GM12878 (cell line): ENCODE measurements at regions of chr17 and their contacts with region 1.

Region 1: DNA sequence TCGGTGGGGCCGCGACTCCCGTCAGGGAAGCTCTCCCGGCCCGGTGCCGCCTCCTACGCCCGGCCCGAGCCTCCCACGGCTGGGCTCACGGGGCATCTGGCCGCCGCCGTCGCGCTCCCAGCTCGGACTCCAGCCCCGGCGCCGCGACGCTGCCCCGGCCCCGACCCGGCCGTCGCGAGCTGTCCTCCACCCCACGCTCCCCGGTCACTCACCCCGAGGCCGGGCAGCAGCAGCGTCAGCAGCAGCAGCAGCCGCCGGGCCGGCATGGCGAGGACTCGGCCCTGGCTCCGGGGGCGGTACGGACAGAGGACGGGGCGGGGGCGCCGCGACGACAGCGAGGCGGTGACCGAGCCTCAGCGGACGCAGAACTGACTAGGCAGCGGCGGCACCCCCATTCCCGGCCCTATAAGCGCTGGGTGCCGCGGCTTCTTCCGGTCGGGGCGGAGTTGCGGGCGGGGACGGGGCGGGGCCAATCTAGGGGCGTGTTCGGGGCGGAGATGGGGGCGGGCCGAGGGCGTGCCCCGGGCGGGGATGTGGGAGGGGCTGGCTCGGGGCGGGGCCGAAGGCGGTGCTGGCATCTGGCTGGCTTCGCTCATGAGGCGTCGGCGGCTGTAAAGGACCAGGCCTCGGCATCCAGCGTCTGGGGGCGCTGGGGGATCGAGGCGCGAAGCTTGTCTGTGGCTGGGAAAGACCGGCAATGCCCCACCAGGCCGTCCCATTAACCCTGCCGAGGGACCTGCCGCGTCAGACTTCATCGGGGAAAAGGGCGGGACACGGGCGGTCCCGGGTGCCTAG is at the start of gene ERN1:
- DNase-seq: peak; percentile 54
- ATAC-seq: peak; percentile 89
- H3K4me3 ChIP-seq: peak within 1 kb of the TSS; percentile 93
- H3K27ac ChIP-seq: peak within 1 kb of the TSS; percentile 83
- H3K4me1 ChIP-seq: peaks cover 32% of the 10 kb centered on the region
- H3K27me3 ChIP-seq: no peaks in the 10 kb centered on the region
- CTCF ChIP-seq: 0 out of 6 replicates have a peak, but pooled peaks of 1 of the 3 experiments have one; percentile 0
- EP300 ChIP-seq: no peak
- POLR2A ChIP-seq: peak; percentile 98
- RAD21 ChIP-seq: no peak
- polyA plus RNA-seq, gene ERN1: 2.6 to 3.4 TPM

Region 2: GRCh38 chr17:63919311-63919723 is 210.6 kb before region 1 on chr17:
- CTCF ChIA-PET with region 1: interaction called, 206 read pairs
- POLR2A ChIA-PET with region 1: interaction called, 15 read pairs
- RAD21 ChIA-PET with region 1: interaction called, 70 read pairs
- SMC1A ChIA-PET with region 1: interaction called, 55 read pairs
- in situ Hi-C with region 1: loop called (anchors 5 kb)
- intact Hi-C with region 1: loop called (anchors 2 kb)
- DNase-seq: peak; percentile 71
- ATAC-seq: peak; percentile 83
- H3K4me3 ChIP-seq: no peak overlapping the region
- H3K27ac ChIP-seq: no peak overlapping the region
- H3K4me1 ChIP-seq: peaks cover 16% of the 10 kb centered on the region
- H3K27me3 ChIP-seq: no peaks in the 10 kb centered on the region
- CTCF ChIP-seq: peak; percentile 92 to 97 (median 94)
- EP300 ChIP-seq: no peak
- POLR2A ChIP-seq: no peak
- RAD21 ChIP-seq: peak; percentile 97

Region 3: GRCh38 chr17:63993368-63993985 is 136.5 kb before region 1 on chr17:
- CTCF ChIA-PET with region 1: interaction called, 13 read pairs
- POLR2A ChIA-PET with region 1: no interaction called
- RAD21 ChIA-PET with region 1: interaction called, 8 read pairs
- SMC1A ChIA-PET with region 1: interaction called, 10 read pairs
- in situ Hi-C with region 1: no loop called
- intact Hi-C with region 1: no loop called
- DNase-seq: no peak
- ATAC-seq: no peak
- H3K4me3 ChIP-seq: no peak overlapping the region
- H3K27ac ChIP-seq: no peak overlapping the region
- H3K4me1 ChIP-seq: peaks cover 4% of the 10 kb centered on the region
- H3K27me3 ChIP-seq: peaks cover 3 to 7% of the 10 kb centered on the region in 2 experiments
- CTCF ChIP-seq: no peak
- EP300 ChIP-seq: no peak
- POLR2A ChIP-seq: no peak
- RAD21 ChIP-seq: no peak

Region 4: DNA sequence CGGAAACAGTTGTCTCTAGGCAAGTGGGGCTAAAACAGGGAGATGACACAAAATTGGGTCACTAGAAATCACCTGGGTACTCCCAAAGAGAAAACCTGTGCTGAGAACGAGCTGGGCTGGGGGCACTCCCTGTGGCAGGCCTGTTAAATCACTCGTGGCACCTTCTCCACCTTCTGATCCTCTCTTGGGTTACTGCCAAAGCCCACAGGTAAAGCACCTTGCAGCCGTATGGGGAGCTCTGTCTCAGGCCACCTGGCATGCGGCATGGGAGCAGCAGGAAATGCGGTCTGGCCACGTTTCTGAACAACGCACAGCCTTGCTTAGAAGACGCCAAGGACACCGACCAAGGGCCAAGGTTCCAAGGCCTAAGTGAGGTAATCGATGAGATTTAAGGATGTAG is 88.0 kb before region 1 on chr17:
- CTCF ChIA-PET with region 1: interaction called, 23 read pairs
- POLR2A ChIA-PET with region 1: interaction called, 3 read pairs
- RAD21 ChIA-PET with region 1: interaction called, 6 read pairs
- SMC1A ChIA-PET with region 1: interaction called, 9 read pairs
- in situ Hi-C with region 1: no loop called
- intact Hi-C with region 1: no loop called
- DNase-seq: no peak
- ATAC-seq: no peak
- H3K4me3 ChIP-seq: no peak overlapping the region
- H3K27ac ChIP-seq: no peak overlapping the region
- H3K4me1 ChIP-seq: no peaks in the 10 kb centered on the region
- H3K27me3 ChIP-seq: no peaks in the 10 kb centered on the region
- CTCF ChIP-seq: no peak
- EP300 ChIP-seq: no peak
- POLR2A ChIP-seq: no peak
- RAD21 ChIP-seq: no peak

Region 5: GRCh38 chr17:64073771-64074703 is 55.9 kb before region 1 on chr17:
- CTCF ChIA-PET with region 1: interaction called, 82 read pairs
- POLR2A ChIA-PET with region 1: interaction called, 37 read pairs
- RAD21 ChIA-PET with region 1: interaction called, 78 read pairs
- SMC1A ChIA-PET with region 1: interaction called, 72 read pairs
- in situ Hi-C with region 1: no loop called
- intact Hi-C with region 1: no loop called
- DNase-seq: peak; percentile 62
- ATAC-seq: peak; percentile 96
- H3K4me3 ChIP-seq: peak overlapping the region; percentile 32; the same call in 1 of the 2 replicates
- H3K27ac ChIP-seq: peak overlapping the region; percentile 72
- H3K4me1 ChIP-seq: peaks cover 46% of the 10 kb centered on the region
- H3K27me3 ChIP-seq: no peaks in the 10 kb centered on the region
- CTCF ChIP-seq: no peak
- EP300 ChIP-seq: peak; percentile 66 to 91; a peak in 3 of 4 replicates
- POLR2A ChIP-seq: no peak
- RAD21 ChIP-seq: no peak; the same call in 1 of the 2 replicates

Region 6: DNA sequence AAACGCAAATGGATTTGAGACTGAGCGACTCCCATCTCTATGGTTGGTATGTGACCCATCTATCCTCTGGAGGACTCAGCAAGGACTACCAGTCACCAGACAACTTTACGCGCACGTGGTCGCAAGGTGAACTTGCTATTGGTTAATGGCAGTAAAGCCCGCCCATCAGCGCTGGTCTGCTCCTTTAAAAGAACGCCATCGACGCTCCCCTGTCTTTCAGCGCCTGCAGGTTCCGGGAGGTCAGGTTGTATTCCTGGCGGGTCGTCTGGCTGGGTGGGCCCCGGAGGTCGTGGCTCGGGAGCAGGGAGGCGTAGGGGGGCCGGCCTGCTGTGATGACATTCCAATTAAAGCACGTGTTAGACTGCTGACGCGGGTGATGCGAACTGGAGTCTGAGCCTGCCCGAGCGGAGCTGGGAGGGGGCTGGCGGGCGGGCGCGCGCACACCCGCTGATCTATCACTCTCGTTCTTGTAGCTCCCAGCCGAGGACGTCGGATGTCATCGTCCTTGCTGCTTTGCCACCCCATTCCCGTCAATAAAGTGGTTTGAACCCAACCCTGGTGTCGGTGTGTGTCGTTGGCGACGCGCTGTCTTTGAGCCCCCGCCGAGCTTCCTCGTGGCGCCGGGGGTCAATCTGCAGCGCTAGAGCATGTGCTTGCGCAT is 15.9 kb after region 1 on chr17:
- CTCF ChIA-PET with region 1: interaction called, 72 read pairs
- POLR2A ChIA-PET with region 1: interaction called, 13 read pairs
- RAD21 ChIA-PET with region 1: interaction called, 22 read pairs
- SMC1A ChIA-PET with region 1: interaction called, 50 read pairs
- in situ Hi-C with region 1: no loop called
- intact Hi-C with region 1: no loop called
- DNase-seq: peak; percentile 97
- ATAC-seq: peak; percentile 95
- H3K4me3 ChIP-seq: peak overlapping the region; percentile 79
- H3K27ac ChIP-seq: peak overlapping the region; percentile 94
- H3K4me1 ChIP-seq: peaks cover 3% of the 10 kb centered on the region; the same call in 1 of the 2 replicates
- H3K27me3 ChIP-seq: no peaks in the 10 kb centered on the region
- CTCF ChIP-seq: no peak
- EP300 ChIP-seq: no peak
- POLR2A ChIP-seq: peak; percentile 98
- RAD21 ChIP-seq: no peak